Activated B cell treated with CpG ODN at 0.5 μM for 24 hours (primary cell): ENCODE measurements at regions of chr2 and their contacts with region 1.

Region 1: DNA sequence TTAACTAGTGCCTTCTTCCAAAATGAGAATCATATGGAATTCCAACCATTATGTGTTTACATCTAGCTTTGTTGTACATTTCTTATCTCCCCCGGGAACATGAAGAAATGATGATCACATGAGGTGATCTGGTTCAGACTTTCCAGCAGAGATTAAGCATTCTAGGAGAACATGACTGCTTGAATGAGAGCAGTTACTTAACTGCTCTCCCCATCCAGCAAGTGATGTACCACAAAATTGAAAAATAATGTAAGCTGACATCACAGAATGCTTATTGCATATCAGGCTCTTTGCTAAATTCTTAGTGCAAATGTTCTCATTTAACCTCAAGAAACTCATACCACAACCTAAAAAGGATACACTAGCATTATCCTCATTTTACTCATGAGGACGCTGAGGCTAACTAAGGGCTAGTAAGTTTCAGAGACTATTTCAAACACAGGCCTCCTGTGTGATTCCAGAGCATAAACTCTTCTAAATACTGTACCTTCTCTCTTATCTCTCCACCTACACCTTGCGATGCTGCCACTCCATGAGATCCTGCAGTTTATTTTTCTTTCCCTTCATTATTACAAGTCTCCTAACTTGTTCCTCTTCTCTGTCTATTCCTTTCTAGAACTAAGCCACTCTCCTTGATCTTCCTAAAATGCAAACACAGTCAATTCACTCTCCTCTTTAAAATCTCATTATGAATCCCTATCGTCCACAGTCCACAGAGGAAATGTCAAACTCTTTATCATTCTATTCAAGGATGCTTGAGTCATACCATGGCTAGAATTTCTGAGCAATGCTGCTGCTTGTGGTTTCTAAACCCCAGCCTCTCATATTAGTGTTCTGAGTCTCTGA is 1224.8 kb upstream of the ZEB2 start:
- DNase-seq: no peak
- ATAC-seq: peak; percentile 49
- H3K4me3 Mint-ChIP-seq: peak overlapping the region; percentile 50
- H3K27ac Mint-ChIP-seq: peak overlapping the region; percentile 84
- H3K4me1 Mint-ChIP-seq: peaks cover 88% of the 10 kb centered on the region
- H3K27me3 Mint-ChIP-seq: no peaks in the 10 kb centered on the region
- CTCF ChIP-seq: no peak

Region 2: GRCh38 chr2:144374163-144374661 is 1370.6 kb before region 1 on chr2:
- CTCF ChIA-PET with region 1: no interaction called
- POLR2A ChIA-PET with region 1: no interaction called
- intact Hi-C with region 1: loop called (anchors 2 kb)
- DNase-seq: no peak
- ATAC-seq: peak; percentile 85
- H3K4me3 Mint-ChIP-seq: peak overlapping the region; percentile 22
- H3K27ac Mint-ChIP-seq: peak overlapping the region; percentile 16
- H3K4me1 Mint-ChIP-seq: peaks cover 35% of the 10 kb centered on the region
- H3K27me3 Mint-ChIP-seq: peaks cover 3% of the 10 kb centered on the region
- CTCF ChIP-seq: no peak

Region 3: GRCh38 chr2:145315053-145315452 is 429.7 kb before region 1 on chr2:
- CTCF ChIA-PET with region 1: no interaction called
- POLR2A ChIA-PET with region 1: no interaction called
- intact Hi-C with region 1: no loop called
- DNase-seq: no peak
- ATAC-seq: no peak
- H3K4me3 Mint-ChIP-seq: no peak overlapping the region
- H3K27ac Mint-ChIP-seq: no peak overlapping the region
- H3K4me1 Mint-ChIP-seq: no peaks in the 10 kb centered on the region
- H3K27me3 Mint-ChIP-seq: no peaks in the 10 kb centered on the region
- CTCF ChIP-seq: no peak

Region 4: GRCh38 chr2:145593832-145594614 is 150.7 kb before region 1 on chr2:
- CTCF ChIA-PET with region 1: no interaction called
- POLR2A ChIA-PET with region 1: interaction called, 10 read pairs
- intact Hi-C with region 1: loop called (anchors 2 kb)
- DNase-seq: no peak
- ATAC-seq: no peak
- H3K4me3 Mint-ChIP-seq: peak overlapping the region; percentile 6
- H3K27ac Mint-ChIP-seq: peak overlapping the region; percentile 83
- H3K4me1 Mint-ChIP-seq: peaks cover 74% of the 10 kb centered on the region
- H3K27me3 Mint-ChIP-seq: no peaks in the 10 kb centered on the region
- CTCF ChIP-seq: no peak

Region 5: GRCh38 chr2:145644820-145645302 is 99.9 kb before region 1 on chr2:
- CTCF ChIA-PET with region 1: no interaction called
- POLR2A ChIA-PET with region 1: interaction called, 20 read pairs
- intact Hi-C with region 1: loop called (anchors 2 kb)
- DNase-seq: no peak
- ATAC-seq: peak; percentile 86
- H3K4me3 Mint-ChIP-seq: peak overlapping the region; percentile 70
- H3K27ac Mint-ChIP-seq: peak overlapping the region; percentile 92
- H3K4me1 Mint-ChIP-seq: peaks cover 47% of the 10 kb centered on the region
- H3K27me3 Mint-ChIP-seq: no peaks in the 10 kb centered on the region
- CTCF ChIP-seq: no peak

Region 6: DNA sequence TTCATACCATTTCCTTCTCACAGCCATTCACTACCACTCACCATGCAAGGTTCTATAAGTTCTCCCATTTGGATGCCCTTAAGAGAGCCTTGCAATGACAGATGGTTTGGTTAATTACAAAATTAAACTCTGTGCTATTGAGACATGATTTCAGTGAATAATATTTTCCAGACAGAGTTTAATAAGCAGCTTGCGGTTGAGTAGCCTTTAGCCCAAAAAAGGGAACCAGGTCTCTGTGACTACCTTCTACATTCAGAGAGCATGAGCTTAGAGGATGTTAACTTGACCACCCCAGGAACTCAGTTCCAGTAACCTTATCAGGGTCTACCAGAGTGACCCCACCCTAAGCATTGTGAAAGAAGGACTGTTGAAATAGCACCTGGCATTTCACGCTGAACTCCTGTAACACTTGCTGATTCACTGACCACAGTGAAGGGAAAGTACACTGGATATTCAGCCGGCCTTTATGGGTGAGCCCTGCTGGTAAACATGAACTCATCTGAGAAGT is 51.7 kb before region 1 on chr2:
- CTCF ChIA-PET with region 1: interaction called, 8 read pairs
- POLR2A ChIA-PET with region 1: interaction called, 29 read pairs
- intact Hi-C with region 1: loop called (anchors 1 kb)
- DNase-seq: no peak
- ATAC-seq: peak; percentile 86
- H3K4me3 Mint-ChIP-seq: peak overlapping the region; percentile 71
- H3K27ac Mint-ChIP-seq: peak overlapping the region; percentile 89
- H3K4me1 Mint-ChIP-seq: peaks cover 55% of the 10 kb centered on the region
- H3K27me3 Mint-ChIP-seq: no peaks in the 10 kb centered on the region
- CTCF ChIP-seq: no peak